ENCODE measurements at regions of chr5 and their contacts with region 1.

Region 1: DNA sequence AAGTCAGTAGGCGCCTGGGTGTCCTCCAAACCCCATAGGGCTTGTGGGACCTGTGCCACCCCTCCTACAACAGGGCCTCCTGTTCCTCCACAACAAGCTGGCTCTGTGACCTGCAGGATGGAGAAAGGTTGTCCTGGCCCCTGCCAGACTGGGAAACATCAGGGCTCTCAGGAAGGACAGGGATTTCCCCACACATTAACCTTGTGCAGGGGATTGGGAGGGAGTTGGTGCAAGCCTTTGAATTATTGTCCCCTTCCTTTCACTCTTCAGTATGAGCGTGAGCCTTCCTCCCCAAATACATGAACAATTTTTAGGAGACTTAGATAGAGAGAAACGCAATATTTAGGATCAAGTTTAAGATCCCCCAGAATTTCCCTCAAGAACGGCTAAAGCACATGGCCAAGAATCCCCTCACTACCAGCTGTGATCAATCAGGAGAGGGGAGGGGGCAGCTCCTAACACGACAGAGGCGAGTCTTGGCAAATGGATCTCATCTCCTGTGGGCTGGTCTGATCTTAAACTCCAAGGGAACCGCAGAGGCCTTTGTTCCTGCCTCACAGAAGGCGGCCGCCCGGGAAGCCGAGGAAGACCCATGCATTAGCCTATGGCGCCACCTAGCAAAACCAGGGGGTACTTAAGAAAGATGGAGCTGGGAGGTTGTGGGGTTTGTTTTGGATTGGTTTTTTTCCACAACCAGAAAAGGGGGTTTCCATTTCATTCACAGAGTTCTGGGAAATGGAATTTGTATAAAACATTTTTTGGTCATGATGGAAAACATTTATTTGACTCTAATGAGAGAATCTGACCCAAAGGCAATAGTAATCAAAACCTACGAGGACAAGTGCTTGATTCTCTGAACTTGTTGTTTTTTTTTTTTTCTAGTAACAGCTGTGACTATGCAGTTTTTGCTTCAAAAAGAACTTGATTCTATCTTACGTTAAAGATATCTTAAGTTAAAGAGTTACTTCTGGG is 36.1 kb upstream of the OSMR start:
- DNase-seq: no peak
- ATAC-seq: peak; percentile 90
- H3K4me3 ChIP-seq: no peak overlapping the region
- H3K27ac ChIP-seq: peak overlapping the region; percentile 93
- H3K4me1 ChIP-seq: peaks cover 44% of the 10 kb centered on the region
- H3K27me3 ChIP-seq: no peaks in the 10 kb centered on the region
- CTCF ChIP-seq: peak; percentile 90

Region 2: GRCh38 chr5:38420691-38421390 is 388.8 kb before region 1 on chr5:
- CTCF ChIA-PET with region 1: interaction called, 18 read pairs
- POLR2A ChIA-PET with region 1: no interaction called
- in situ Hi-C with region 1: no loop called
- intact Hi-C with region 1: loop called (anchors 2 kb)
- DNase-seq: peak; percentile 63
- ATAC-seq: peak; percentile 93
- H3K4me3 ChIP-seq: no peak overlapping the region
- H3K27ac ChIP-seq: no peak overlapping the region
- H3K4me1 ChIP-seq: no peaks in the 10 kb centered on the region
- H3K27me3 ChIP-seq: no peaks in the 10 kb centered on the region; the same call in 1 of the 2 replicates
- CTCF ChIP-seq: peak; percentile 90

Region 3: GRCh38 chr5:38556599-38557305 is 252.9 kb before region 1 on chr5 and contains the start of gene LIFR:
- CTCF ChIA-PET with region 1: no interaction called
- POLR2A ChIA-PET with region 1: no interaction called
- in situ Hi-C with region 1: no loop called
- intact Hi-C with region 1: loop called (anchors 2 kb)
- DNase-seq: no peak
- ATAC-seq: peak; percentile 93
- H3K4me3 ChIP-seq: peak within 1 kb of the TSS; percentile 89 to 95
- H3K27ac ChIP-seq: peak within 1 kb of the TSS; percentile 96
- H3K4me1 ChIP-seq: peaks cover 35% of the 10 kb centered on the region
- H3K27me3 ChIP-seq: no peaks in the 10 kb centered on the region
- CTCF ChIP-seq: no peak
- total RNA-seq, gene LIFR: 91.3 TPM

Region 4: DNA sequence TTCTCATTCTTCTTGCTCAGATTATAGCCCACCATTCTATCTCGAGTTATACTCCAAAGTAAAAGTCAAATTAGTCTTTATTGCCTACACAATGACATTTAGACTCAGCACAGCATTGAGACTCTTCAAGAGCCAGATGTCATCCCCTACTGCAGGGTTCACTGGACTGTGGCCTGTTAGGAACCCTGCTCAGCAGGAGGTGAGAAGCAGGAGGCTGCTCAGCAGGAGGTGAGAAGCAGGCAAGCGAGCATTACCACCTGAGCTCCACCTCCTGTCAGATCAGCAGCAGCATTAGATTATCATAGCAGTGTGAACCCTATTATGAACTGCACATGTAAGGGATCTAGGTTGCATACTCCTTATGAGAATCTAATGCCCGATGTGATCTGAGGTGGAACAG is 240.5 kb before region 1 on chr5:
- CTCF ChIA-PET with region 1: interaction called, 5 read pairs
- POLR2A ChIA-PET with region 1: interaction called, 12 read pairs
- in situ Hi-C with region 1: no loop called
- intact Hi-C with region 1: no loop called
- DNase-seq: no peak
- ATAC-seq: no peak
- H3K4me3 ChIP-seq: no peak overlapping the region
- H3K27ac ChIP-seq: no peak overlapping the region
- H3K4me1 ChIP-seq: no peaks in the 10 kb centered on the region
- H3K27me3 ChIP-seq: peaks cover 2% of the 10 kb centered on the region; the same call in 1 of the 2 replicates
- CTCF ChIP-seq: no peak

Region 5: GRCh38 chr5:39100851-39101396 is 291.2 kb after region 1 on chr5:
- CTCF ChIA-PET with region 1: no interaction called
- POLR2A ChIA-PET with region 1: no interaction called
- in situ Hi-C with region 1: no loop called
- intact Hi-C with region 1: no loop called
- DNase-seq: peak; percentile 98
- ATAC-seq: peak; percentile 90
- H3K4me3 ChIP-seq: peak overlapping the region in 1 of 2 experiments; percentile 1; a peak in 1 of 4 replicates
- H3K27ac ChIP-seq: peak overlapping the region; percentile 31; the same call in 1 of the 2 replicates
- H3K4me1 ChIP-seq: no peaks in the 10 kb centered on the region
- H3K27me3 ChIP-seq: no peaks in the 10 kb centered on the region
- CTCF ChIP-seq: no peak

Region 6: DNA sequence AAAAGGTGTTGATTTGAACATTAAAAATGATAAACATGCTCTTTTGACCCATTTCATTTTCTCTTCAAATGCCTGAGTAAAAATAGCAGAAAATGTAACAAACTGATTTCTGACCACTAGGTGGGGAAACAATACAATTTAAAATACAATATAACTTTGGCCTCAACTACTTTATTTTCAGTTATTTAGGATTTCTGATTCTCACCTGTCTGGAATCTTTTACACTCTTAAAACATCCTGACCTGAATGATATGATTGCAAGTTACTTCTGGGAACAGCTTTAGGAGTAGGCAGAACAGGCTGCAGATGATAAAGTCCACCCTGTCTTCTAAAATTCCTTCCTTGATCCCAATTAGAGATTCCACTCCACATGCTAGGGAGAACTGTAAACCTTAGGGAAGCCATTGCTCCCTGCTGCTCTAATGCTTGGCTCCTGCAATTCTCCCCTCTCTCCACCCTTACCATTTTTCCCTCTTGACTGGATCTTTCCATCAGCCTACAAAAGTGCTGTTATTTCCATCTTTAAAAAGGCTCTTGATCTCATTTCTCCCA is 339.4 kb after region 1 on chr5:
- CTCF ChIA-PET with region 1: interaction called, 10 read pairs
- POLR2A ChIA-PET with region 1: no interaction called
- in situ Hi-C with region 1: no loop called
- intact Hi-C with region 1: no loop called
- DNase-seq: no peak
- ATAC-seq: no peak
- H3K4me3 ChIP-seq: no peak overlapping the region
- H3K27ac ChIP-seq: no peak overlapping the region
- H3K4me1 ChIP-seq: no peaks in the 10 kb centered on the region
- H3K27me3 ChIP-seq: no peaks in the 10 kb centered on the region
- CTCF ChIP-seq: peak; percentile 37; the same call in 1 of the 2 replicates